ENCODE measurements at regions of chr17 and their contacts with region 1.

Region 1: GRCh38 chr17:78865682-78866390 is 25.2 kb upstream of the USP36 start:
- DNase-seq: peak; percentile 80 to 94 (median 92)
- ATAC-seq: peak; percentile 51 to 86 (median 82)
- H3K4me3 ChIP-seq: no peak overlapping the region
- H3K27ac ChIP-seq: peak overlapping the region in 3 of 4 donors; percentile 6 to 41 (median 37)
- H3K4me1 ChIP-seq: peaks cover 4 to 24% (median 8%) of the 10 kb centered on the region in 3 donors
- H3K27me3 ChIP-seq: no peaks in the 10 kb centered on the region
- CTCF ChIP-seq: peak; percentile 92 to 98 (median 93)

Region 2: DNA sequence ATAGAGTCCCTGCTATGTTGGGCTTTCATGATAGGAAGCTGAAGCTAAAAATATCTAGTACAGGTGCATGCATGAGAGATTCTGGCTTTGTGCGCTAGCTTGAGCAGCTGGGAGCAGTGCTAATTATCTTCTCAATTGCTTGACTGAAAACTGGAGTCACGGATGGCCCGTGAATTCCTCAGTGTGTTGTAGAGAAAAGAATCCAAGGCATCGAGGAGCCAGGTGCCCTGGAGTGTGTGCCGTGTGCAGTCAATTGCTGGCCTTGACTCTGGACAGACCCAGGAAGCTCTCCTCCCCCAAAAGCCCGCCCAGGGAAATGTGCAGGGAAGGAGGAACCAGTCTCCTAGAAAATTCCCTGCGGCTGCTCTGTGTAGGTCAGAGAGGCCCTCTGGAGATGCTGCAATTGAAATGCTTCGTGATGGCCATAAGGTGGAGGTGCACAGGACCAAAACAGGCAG is 99.7 kb after region 1 on chr17:
- intact Hi-C with region 1: loop called in 2 of 3 experiments (anchors 5 kb)
- DNase-seq: no peak
- ATAC-seq: no peak
- H3K4me3 ChIP-seq: no peak overlapping the region
- H3K27ac ChIP-seq: no peak overlapping the region
- H3K4me1 ChIP-seq: no peaks in the 10 kb centered on the region
- H3K27me3 ChIP-seq: no peaks in the 10 kb centered on the region
- CTCF ChIP-seq: no peak

Region 3: GRCh38 chr17:78970834-78971773 is 105.3 kb after region 1 on chr17:
- intact Hi-C with region 1: loop called in 2 of 3 experiments (anchors 5 kb)
- DNase-seq: peak; percentile 71 to 91 (median 86)
- ATAC-seq: peak; percentile 53 to 77 (median 70)
- H3K4me3 ChIP-seq: no peak overlapping the region
- H3K27ac ChIP-seq: peak overlapping the region in 3 of 4 donors; percentile 11 to 37 (median 25)
- H3K4me1 ChIP-seq: peaks cover 6 to 12% (median 8%) of the 10 kb centered on the region in 3 donors
- H3K27me3 ChIP-seq: no peaks in the 10 kb centered on the region
- CTCF ChIP-seq: peak; percentile 72 to 84 (median 81)

Region 4: GRCh38 chr17:79114458-79115301 is 248.8 kb after region 1 on chr17:
- intact Hi-C with region 1: no loop called
- DNase-seq: peak in 4 of 6 donors; percentile 29 to 57 (median 36)
- ATAC-seq: peak; percentile 56 to 86 (median 77)
- H3K4me3 ChIP-seq: no peak overlapping the region
- H3K27ac ChIP-seq: no peak overlapping the region
- H3K4me1 ChIP-seq: no peaks in the 10 kb centered on the region
- H3K27me3 ChIP-seq: no peaks in the 10 kb centered on the region
- CTCF ChIP-seq: no peak